HepG2 (cell line): ENCODE measurements at regions of chr2 and their contacts with region 1.

Region 1: DNA sequence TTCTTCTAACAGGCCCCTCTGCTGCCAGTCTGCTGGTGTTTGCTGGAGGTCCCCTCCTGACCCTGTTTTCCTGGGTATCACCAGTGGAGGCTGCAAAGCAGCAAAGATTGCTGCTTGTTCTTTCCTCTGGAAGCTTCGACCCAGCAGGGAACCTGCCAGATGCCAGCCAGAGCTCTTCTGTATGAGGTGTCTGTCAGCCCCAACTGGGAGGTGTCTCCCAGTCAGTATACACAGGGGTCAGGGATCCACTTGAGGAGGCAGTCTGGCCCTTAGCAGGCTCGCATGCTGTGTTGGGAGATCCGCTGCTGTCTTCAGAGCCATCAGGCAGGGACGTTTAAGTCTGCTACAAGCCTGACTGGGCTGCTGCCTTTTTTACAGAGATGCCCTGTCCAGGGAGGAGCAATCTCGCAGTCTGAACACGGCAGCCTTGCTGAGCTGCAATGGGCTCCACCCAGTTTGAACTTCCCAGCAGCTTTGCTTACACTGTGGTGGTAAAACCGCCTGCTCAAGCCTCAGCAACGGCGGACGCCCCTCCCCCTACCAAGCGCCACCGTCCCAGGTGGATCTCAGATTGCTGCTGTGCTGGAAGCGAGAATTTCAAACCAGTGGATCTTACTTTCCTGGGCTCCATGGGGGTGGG is 29.9 kb downstream of the CHCHD5 start:
- DNase-seq: peak; percentile 28
- ATAC-seq: peak; percentile 83
- H3K4me3 ChIP-seq: peak overlapping the region in 2 of 3 experiments; percentile 15 to 19; a peak in 2 of 6 replicates
- H3K27ac ChIP-seq: no peak overlapping the region
- H3K4me1 ChIP-seq: peaks cover 41% of the 10 kb centered on the region
- H3K27me3 ChIP-seq: peaks cover 2 to 3% of the 10 kb centered on the region in 2 experiments; a peak in 1 of 5 replicates
- CTCF ChIP-seq: no peak
- EP300 ChIP-seq: no peak
- POLR2A ChIP-seq: no peak
- RAD21 ChIP-seq: no peak

Region 2: GRCh38 chr2:112884869-112885505 is 270.7 kb after region 1 on chr2:
- CTCF ChIA-PET with region 1: no interaction called
- POLR2A ChIA-PET with region 1: no interaction called
- in situ Hi-C with region 1: no loop called
- intact Hi-C with region 1: loop called (anchors 10 kb)
- DNase-seq: peak; percentile 59
- ATAC-seq: peak; percentile 92
- H3K4me3 ChIP-seq: no peak overlapping the region
- H3K27ac ChIP-seq: no peak overlapping the region
- H3K4me1 ChIP-seq: peaks cover 31% of the 10 kb centered on the region
- H3K27me3 ChIP-seq: 0 out of 5 replicates have a peak, but pooled peaks cover 0 to 5% of the 10 kb centered on the region in 2 experiments
- CTCF ChIP-seq: peak; percentile 94
- EP300 ChIP-seq: no peak
- POLR2A ChIP-seq: no peak
- RAD21 ChIP-seq: peak; percentile 92